GM18951 (cell line): ENCODE measurements at regions of chr6 and their contacts with region 1.

Region 1: GRCh38 chr6:12605888-12606345 is 110.7 kb upstream of the PHACTR1 start:
- POLR2A ChIP-seq: no peak

Region 2: GRCh38 chr6:11653028-11653583 is 952.8 kb before region 1 on chr6:
- in situ Hi-C with region 1: loop called (anchors 10 kb)
- POLR2A ChIP-seq: no peak

Region 3: DNA sequence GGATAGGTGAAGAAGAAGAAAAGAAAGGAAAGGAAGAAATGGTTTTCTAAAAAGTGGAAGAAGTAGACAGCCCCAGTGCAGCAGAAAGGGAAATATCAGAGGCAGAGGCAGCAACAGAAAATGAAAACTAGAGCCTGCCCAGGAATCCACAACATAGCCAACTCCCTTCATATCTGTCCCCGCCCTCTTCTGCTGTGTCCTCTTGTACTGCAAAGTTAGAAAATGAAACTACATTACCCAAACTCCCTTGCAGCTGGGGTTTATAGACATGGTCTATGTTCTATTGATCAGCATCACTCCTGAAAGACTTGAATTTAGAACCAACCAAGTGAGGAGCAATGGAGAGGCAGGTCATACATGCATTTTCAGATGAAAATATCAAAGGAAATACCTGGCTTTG is 89.8 kb before region 1 on chr6:
- in situ Hi-C with region 1: no loop called
- POLR2A ChIP-seq: no peak